AG04450 (cell line): ENCODE measurements at regions of chr7 and their contacts with region 1.

Region 1: GRCh38 chr7:37201003-37201875 is 247.4 kb downstream of the ELMO1 start:
- DNase-seq: peak; percentile 30
- H3K4me3 ChIP-seq: no peak overlapping the region
- H3K27ac ChIP-seq: no peak overlapping the region
- H3K27me3 ChIP-seq: peaks cover 2% of the 10 kb centered on the region
- CTCF ChIP-seq: peak; percentile 82

Region 2: DNA sequence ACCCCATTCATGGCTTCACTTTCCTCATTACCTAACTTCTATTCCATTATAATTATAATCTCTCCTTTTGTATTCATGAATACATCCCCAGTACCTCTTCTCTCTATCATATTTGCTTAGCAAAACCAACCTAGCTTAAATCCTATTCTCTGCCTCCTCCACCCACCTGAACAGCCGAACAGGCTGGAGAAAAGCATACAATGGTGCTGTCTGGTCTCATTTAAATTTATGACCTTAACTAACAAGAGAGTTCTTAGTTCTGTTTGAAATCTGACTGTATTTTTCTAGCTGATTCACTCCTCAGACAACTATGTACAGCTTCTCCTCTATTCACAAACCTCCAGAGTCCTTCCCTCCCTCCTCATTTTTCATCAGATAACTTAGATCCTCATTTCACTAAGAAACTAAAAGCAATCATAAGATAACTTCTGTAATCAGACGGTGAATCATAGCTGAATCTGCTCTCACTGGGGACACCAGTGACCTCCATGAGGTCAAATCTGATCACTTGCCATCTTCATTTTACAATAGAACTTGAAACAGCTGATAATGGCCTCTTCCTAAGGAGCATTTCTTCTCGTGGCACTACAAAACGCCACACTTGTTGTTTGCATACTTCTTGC is 243.0 kb before region 1 on chr7:
- CTCF ChIA-PET with region 1: interaction called, 19 read pairs
- POLR2A ChIA-PET with region 1: no interaction called
- DNase-seq: no peak
- H3K4me3 ChIP-seq: no peak overlapping the region
- H3K27ac ChIP-seq: no peak overlapping the region
- H3K27me3 ChIP-seq: no peaks in the 10 kb centered on the region
- CTCF ChIP-seq: no peak

Region 3: GRCh38 chr7:36967387-36967786 is 233.9 kb before region 1 on chr7:
- CTCF ChIA-PET with region 1: interaction called, 135 read pairs
- POLR2A ChIA-PET with region 1: no interaction called
- DNase-seq: peak; percentile 21
- H3K4me3 ChIP-seq: no peak overlapping the region
- H3K27ac ChIP-seq: no peak overlapping the region
- H3K27me3 ChIP-seq: peaks cover 2% of the 10 kb centered on the region
- CTCF ChIP-seq: peak; percentile 86